ENCODE measurements at regions of chr6 and their contacts with region 1.

Region 1: GRCh38 chr6:3125815-3126214 is 7.3 kb downstream of the BPHL start:
- DNase-seq: no peak
- H3K4me3 Mint-ChIP-seq: no peak overlapping the region
- H3K27ac Mint-ChIP-seq: no peak overlapping the region
- H3K4me1 Mint-ChIP-seq: no peaks in the 10 kb centered on the region
- H3K27me3 Mint-ChIP-seq: no peaks in the 10 kb centered on the region
- CTCF ChIP-seq: no peak

Region 2: DNA sequence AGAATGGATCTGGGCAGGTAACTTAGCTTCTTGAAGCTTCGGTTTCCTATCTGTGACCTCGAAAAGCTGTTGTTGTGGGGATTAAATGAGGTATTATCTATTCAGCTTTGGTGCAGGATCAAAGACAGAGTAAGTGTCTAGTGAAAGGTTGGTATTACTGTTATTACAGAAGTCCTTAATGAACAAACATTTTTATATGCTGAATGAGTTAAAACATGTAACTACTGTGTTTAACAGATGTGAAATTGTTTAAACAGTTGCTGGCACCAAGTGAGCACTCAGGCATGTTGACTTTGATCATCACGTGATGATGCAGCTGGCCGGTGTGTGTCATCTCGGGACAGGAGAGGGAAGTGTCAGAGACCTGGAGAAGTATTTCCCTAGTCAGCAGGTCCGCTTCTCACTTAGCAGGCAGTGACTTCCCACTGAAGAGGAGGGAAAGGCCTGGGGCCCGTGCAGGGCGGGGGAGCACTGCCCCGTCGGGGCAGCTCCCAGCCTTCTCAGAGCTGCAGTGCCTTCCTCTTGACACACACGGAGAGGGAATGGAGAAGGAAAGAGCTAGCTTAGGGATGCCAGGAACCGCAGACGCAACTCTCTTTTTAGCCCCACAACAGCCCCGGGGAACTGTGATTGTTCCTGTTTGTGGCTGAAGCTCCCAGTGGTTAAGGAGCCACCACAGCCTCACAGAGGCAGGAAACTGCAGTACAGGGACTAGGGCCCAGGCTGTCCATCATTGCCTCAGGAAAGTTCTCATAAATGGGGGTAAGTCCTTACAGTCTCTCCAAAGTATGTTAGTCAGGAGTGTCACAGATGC is 13.5 kb after region 1 on chr6:
- CTCF ChIA-PET with region 1: interaction called, 10 read pairs
- POLR2A ChIA-PET with region 1: interaction called, 4 read pairs
- intact Hi-C with region 1: no loop called
- DNase-seq: peak; percentile 56
- H3K4me3 Mint-ChIP-seq: no peak overlapping the region
- H3K27ac Mint-ChIP-seq: no peak overlapping the region
- H3K4me1 Mint-ChIP-seq: peaks cover 13% of the 10 kb centered on the region
- H3K27me3 Mint-ChIP-seq: no peaks in the 10 kb centered on the region
- CTCF ChIP-seq: no peak